CD8-positive, alpha-beta T cell (primary cell): ENCODE measurements at regions of chr10 and their contacts with region 1.

Region 1: DNA sequence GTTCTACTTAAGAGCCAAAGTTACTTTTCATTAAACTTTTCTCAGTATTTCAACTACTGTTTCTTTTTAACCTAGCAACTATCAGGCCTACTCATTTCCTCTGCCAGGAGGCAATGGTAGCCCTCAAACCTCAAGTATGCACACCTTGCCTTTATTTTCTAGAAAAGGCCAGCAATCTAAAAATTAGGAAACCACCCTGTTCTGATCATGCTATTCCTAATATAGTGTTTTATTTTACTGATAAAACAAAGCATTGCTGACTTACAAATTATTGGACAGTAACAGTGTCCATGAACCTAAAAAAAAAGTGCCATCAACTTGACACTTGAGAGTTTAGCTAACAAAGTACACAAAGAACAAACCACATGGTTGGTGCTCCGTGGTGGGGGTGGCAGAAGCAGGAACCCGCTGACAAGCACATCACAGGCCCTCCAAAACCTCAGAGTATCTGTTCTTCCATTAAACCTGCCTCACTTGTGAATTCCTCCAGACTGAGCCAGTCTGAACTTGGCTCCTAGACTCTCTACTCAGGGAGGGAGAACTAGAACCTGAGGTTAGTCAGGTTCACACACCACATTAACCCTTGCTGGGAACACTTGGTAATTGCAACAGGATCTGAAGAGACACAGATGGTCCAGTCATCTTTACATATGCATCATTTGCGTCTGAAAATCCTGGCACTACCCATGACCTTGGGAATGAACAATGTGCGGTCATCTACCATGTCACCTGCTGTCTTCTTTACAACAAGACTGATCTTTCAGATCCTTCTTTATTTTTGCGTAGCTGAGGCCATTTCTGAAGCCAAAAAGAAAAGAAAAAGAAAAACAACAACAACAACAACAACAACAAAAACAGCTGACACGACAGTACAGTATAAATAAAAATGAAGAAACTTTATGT is 31.9 kb downstream of the PIP4K2A start:
- DNase-seq: peak; percentile 31 to 89 (median 71)
- ATAC-seq: peak; percentile 51
- H3K4me3 ChIP-seq: peak overlapping the region; percentile 4 to 34
- H3K4me3 Mint-ChIP-seq: peak overlapping the region; percentile 68
- H3K27ac ChIP-seq: peak overlapping the region; percentile 75 to 85
- H3K27ac Mint-ChIP-seq: peak overlapping the region; percentile 98
- H3K4me1 ChIP-seq: peaks cover 97% of the 10 kb centered on the region
- H3K4me1 Mint-ChIP-seq: peaks cover 94% of the 10 kb centered on the region
- H3K27me3 ChIP-seq: no peaks in the 10 kb centered on the region
- H3K27me3 Mint-ChIP-seq: no peaks in the 10 kb centered on the region
- CTCF ChIP-seq: no peak

Region 2: DNA sequence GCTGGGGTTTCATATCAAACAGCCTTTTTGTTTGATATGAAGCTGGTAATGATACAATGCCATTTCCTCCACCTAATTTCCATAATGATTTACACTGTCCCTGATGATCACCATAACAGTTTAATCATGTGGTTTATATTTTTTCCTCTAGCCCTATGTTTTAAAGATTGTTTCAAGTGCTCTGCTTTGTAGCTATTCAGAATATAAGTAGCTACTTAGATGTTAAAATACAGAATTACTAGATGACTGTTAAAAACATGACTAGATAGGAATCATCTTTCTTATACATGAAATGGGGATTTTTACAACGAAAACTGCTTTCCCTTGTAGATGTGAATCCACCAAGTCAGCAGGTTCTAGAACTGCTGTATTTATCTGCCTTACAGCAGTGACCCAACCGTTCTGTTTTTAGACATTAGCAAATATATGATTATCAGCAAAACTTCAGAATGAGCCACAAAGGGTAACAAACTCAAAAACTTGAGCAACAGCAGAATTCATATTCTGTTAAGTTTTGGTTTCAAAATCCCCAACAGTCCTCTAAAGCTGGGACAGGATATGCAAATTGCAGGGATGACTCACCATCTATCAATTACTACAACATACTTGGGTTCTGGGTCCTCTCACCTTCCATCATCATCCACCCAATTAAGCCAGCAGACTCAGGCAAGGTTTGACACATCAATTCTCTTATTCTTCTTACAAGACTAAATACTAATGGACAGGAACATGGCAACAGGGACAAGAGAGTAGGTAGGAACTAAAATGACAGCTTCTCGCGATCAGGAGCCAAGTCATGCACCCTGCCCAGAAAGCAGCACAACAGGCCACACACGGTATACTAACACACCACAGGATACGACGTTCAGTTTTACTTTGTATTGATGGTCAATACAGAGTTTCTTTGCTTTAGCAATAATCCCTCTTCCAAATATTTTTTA is 52.0 kb before region 1 on chr10:
- CTCF ChIA-PET with region 1: no interaction called
- POLR2A ChIA-PET with region 1: interaction called, 9 read pairs
- intact Hi-C with region 1: loop called in 1 of 2 experiments (anchors 2 kb)
- DNase-seq: peak in 4 of 9 experiments; percentile 39 to 91 (median 68)
- ATAC-seq: peak; percentile 79
- H3K4me3 ChIP-seq: peak overlapping the region; percentile 16 to 21
- H3K4me3 Mint-ChIP-seq: peak overlapping the region; percentile 72
- H3K27ac ChIP-seq: peak overlapping the region; percentile 16 to 81
- H3K27ac Mint-ChIP-seq: peak overlapping the region; percentile 97
- H3K4me1 ChIP-seq: peaks cover 96% of the 10 kb centered on the region
- H3K4me1 Mint-ChIP-seq: peaks cover 96% of the 10 kb centered on the region
- H3K27me3 ChIP-seq: no peaks in the 10 kb centered on the region
- H3K27me3 Mint-ChIP-seq: no peaks in the 10 kb centered on the region
- CTCF ChIP-seq: no peak

Region 3: GRCh38 chr10:22666287-22667092 is 16.0 kb before region 1 on chr10:
- CTCF ChIA-PET with region 1: interaction called, 13 read pairs
- POLR2A ChIA-PET with region 1: interaction called, 36 read pairs
- intact Hi-C with region 1: loop called (anchors 1 to 2 kb)
- DNase-seq: peak; percentile 30 to 92 (median 67)
- ATAC-seq: peak; percentile 84
- H3K4me3 ChIP-seq: peak overlapping the region; percentile 29 to 42
- H3K4me3 Mint-ChIP-seq: peak overlapping the region; percentile 79
- H3K27ac ChIP-seq: peak overlapping the region; percentile 41 to 67
- H3K27ac Mint-ChIP-seq: peak overlapping the region; percentile 90
- H3K4me1 ChIP-seq: peaks cover 87% of the 10 kb centered on the region
- H3K4me1 Mint-ChIP-seq: peaks cover 83% of the 10 kb centered on the region
- H3K27me3 ChIP-seq: no peaks in the 10 kb centered on the region
- H3K27me3 Mint-ChIP-seq: no peaks in the 10 kb centered on the region
- CTCF ChIP-seq: no peak

Region 4: GRCh38 chr10:22693371-22693784 is 10.9 kb after region 1 on chr10:
- CTCF ChIA-PET with region 1: interaction called, 11 read pairs
- POLR2A ChIA-PET with region 1: interaction called, 5 read pairs
- intact Hi-C with region 1: loop called in 1 of 2 experiments (anchors 1 kb)
- DNase-seq: peak in 2 of 9 experiments; percentile 47 to 59
- ATAC-seq: peak; percentile 56
- H3K4me3 ChIP-seq: no peak overlapping the region
- H3K4me3 Mint-ChIP-seq: peak overlapping the region; percentile 53
- H3K27ac ChIP-seq: peak overlapping the region in 1 of 2 experiments; percentile 52
- H3K27ac Mint-ChIP-seq: peak overlapping the region; percentile 89
- H3K4me1 ChIP-seq: peaks cover 93% of the 10 kb centered on the region
- H3K4me1 Mint-ChIP-seq: peaks cover 95% of the 10 kb centered on the region
- H3K27me3 ChIP-seq: no peaks in the 10 kb centered on the region
- H3K27me3 Mint-ChIP-seq: no peaks in the 10 kb centered on the region
- CTCF ChIP-seq: no peak

Region 5: DNA sequence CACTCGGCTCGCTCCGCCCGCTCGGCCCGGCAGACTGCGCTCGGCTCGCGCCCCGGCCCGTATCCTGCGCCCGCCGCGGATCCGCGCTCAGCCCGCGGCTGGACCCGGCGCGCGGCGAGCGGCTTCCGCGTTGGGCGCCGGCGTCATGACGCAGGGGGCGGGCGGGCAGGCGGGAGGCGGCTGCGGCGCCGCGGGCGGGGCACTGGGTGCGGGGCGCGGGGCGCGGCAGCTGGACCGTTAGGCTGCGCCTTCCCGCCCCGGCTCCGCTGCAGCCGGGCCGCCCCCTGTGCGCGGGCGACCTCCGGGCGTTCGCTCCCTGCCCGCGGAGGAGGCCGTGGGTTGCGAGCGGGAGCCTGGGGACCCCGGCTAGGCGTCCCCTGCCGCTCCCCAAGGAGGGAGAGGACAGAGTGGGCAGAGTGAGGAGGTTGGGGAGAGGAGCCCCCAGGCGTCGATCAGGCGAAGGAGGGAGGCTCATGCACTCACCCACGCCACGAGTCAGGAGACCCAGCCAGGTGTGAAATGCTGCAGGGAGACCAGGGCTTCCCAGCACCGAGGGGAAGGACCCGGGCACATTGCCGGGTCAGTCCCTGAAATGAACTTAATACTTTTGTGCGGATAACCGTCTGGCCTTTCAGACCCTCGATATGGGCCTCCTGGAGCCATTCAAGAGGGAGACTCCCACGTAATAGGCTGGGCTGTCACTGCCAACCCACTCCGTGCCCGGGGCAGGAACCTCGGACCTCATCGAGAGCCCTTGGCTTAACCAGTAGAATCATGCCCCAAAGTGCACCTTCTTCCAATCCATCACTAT is 32.2 kb after region 1 on chr10 and contains the start of gene PIP4K2A:
- CTCF ChIA-PET with region 1: no interaction called
- POLR2A ChIA-PET with region 1: interaction called, 33 read pairs
- intact Hi-C with region 1: loop called (anchors 1 to 2 kb)
- DNase-seq: peak; percentile 43 to 92 (median 75)
- ATAC-seq: peak; percentile 76
- H3K4me3 ChIP-seq: peak within 1 kb of the TSS; percentile 72 to 95
- H3K4me3 Mint-ChIP-seq: peak within 1 kb of the TSS; percentile 94
- H3K27ac ChIP-seq: peak within 1 kb of the TSS; percentile 78 to 81
- H3K27ac Mint-ChIP-seq: peak within 1 kb of the TSS; percentile 92
- H3K4me1 ChIP-seq: peaks cover 25% of the 10 kb centered on the region
- H3K4me1 Mint-ChIP-seq: peaks cover 30% of the 10 kb centered on the region
- H3K27me3 ChIP-seq: no peaks in the 10 kb centered on the region
- H3K27me3 Mint-ChIP-seq: no peaks in the 10 kb centered on the region
- CTCF ChIP-seq: no peak
- total RNA-seq, gene PIP4K2A: 82.5 to 89.5 TPM